ENCODE measurements at regions of chr1 and their contacts with region 1.

Region 1: GRCh38 chr1:71196685-71197084 is 115.8 kb upstream of the ZRANB2 start:
- DNase-seq: peak; percentile 55
- ATAC-seq: peak; percentile 46
- H3K4me3 ChIP-seq: no peak overlapping the region
- H3K27ac ChIP-seq: no peak overlapping the region
- H3K4me1 ChIP-seq: no peaks in the 10 kb centered on the region
- H3K27me3 ChIP-seq: 0 out of 2 replicates have a peak, but pooled peaks cover 8% of the 10 kb centered on the region
- CTCF ChIP-seq: peak; percentile 70

Region 2: GRCh38 chr1:71351438-71351837 is 154.8 kb after region 1 on chr1:
- CTCF ChIA-PET with region 1: no interaction called
- POLR2A ChIA-PET with region 1: no interaction called
- intact Hi-C with region 1: loop called (anchors 5 kb)
- DNase-seq: peak; percentile 90
- ATAC-seq: peak; percentile 84
- H3K4me3 ChIP-seq: no peak overlapping the region
- H3K27ac ChIP-seq: peak overlapping the region; percentile 64
- H3K4me1 ChIP-seq: peaks cover 19% of the 10 kb centered on the region
- H3K27me3 ChIP-seq: no peaks in the 10 kb centered on the region
- CTCF ChIP-seq: no peak

Region 3: GRCh38 chr1:71428029-71428428 is 231.3 kb after region 1 on chr1:
- CTCF ChIA-PET with region 1: no interaction called
- POLR2A ChIA-PET with region 1: no interaction called
- intact Hi-C with region 1: no loop called
- DNase-seq: no peak
- ATAC-seq: no peak
- H3K4me3 ChIP-seq: no peak overlapping the region
- H3K27ac ChIP-seq: no peak overlapping the region
- H3K4me1 ChIP-seq: no peaks in the 10 kb centered on the region
- H3K27me3 ChIP-seq: no peaks in the 10 kb centered on the region
- CTCF ChIP-seq: no peak

Region 4: DNA sequence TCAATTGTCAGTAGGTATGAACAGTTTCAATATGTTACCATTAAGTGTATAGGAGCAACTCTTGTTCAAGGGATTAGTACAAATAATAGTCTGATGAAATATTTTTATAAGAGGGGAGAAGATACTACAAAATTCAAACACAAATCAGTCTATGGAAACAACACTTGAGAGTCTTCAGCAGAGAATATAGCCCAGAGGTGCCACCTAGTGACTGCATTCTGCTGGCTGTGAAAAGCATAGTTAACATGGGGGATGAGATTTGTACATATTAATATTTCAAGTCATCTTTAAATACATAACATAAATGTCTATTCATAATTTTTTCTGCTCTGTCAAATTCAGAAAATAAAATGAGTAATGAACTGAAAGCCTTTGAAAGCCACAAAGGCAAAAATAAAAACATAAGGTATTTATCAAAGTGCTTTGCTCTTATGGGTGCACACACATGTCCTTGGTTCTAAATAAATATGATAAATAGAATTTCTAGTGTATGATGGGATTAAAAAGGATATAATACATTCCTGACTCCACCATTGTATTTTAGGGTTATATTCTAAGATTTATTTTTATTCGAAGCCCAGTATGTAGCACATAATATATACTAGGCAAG is 325.1 kb after region 1 on chr1:
- CTCF ChIA-PET with region 1: no interaction called
- POLR2A ChIA-PET with region 1: no interaction called
- intact Hi-C with region 1: loop called (anchors 5 kb)
- DNase-seq: peak; percentile 70
- ATAC-seq: peak; percentile 66
- H3K4me3 ChIP-seq: no peak overlapping the region
- H3K27ac ChIP-seq: no peak overlapping the region
- H3K4me1 ChIP-seq: peaks cover 5% of the 10 kb centered on the region
- H3K27me3 ChIP-seq: no peaks in the 10 kb centered on the region
- CTCF ChIP-seq: peak; percentile 87

Region 5: DNA sequence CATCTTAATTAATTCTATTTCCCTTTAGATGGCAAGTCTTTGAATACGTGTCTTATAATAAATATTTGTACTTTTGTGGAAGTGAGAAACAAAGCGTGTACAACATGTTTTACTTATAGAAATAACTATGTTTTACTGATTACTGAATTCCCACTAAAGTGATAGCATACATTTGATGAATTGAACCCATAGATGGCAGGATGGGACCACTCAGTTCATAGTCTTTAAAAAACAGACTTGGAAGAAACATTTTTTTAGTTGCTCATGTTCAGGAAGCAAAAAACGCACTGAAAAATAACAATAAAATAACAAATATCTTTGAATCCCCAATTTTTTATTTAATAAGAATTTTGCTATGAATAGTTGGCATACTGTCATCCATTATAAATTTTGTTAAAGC is 391.3 kb after region 1 on chr1:
- CTCF ChIA-PET with region 1: no interaction called
- POLR2A ChIA-PET with region 1: no interaction called
- intact Hi-C with region 1: loop called (anchors 2 kb)
- DNase-seq: peak; percentile 47
- ATAC-seq: no peak; the same call in 1 of the 2 replicates
- H3K4me3 ChIP-seq: no peak overlapping the region
- H3K27ac ChIP-seq: no peak overlapping the region
- H3K4me1 ChIP-seq: peaks cover 14% of the 10 kb centered on the region
- H3K27me3 ChIP-seq: no peaks in the 10 kb centered on the region
- CTCF ChIP-seq: peak; percentile 60

Region 6: DNA sequence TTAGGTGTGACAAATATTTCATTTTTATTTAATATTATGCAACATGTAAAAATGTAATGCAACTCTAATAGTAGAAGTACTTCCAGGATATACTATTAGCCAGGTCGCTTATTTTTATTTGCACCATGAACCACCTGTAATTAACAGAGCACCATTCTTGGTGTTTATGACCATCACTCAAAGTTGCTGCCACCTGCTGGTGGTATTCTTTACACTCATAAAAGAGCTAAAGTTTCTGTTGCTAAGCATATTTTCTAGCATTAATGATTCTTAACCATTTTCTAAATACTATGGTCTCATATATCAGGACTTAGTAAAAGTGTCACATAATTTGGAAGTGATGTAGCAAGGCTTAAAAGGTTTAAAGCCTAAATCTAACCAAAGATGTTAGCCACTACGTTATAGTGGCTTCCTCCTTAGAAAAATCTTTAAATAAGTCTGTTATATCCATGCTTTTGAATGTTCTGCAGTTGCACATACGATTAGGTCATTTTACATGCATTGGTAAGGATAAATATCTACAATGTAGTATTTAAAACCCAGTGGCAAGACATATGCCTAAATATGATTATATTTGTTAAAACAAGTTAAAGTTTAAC is 841.2 kb after region 1 on chr1:
- CTCF ChIA-PET with region 1: interaction called, 6 read pairs
- POLR2A ChIA-PET with region 1: no interaction called
- intact Hi-C with region 1: loop called (anchors 2 kb)
- DNase-seq: peak; percentile 67
- ATAC-seq: peak; percentile 29; the same call in 1 of the 2 replicates
- H3K4me3 ChIP-seq: no peak overlapping the region
- H3K27ac ChIP-seq: no peak overlapping the region
- H3K4me1 ChIP-seq: no peaks in the 10 kb centered on the region
- H3K27me3 ChIP-seq: no peaks in the 10 kb centered on the region
- CTCF ChIP-seq: peak; percentile 85